ENCODE measurements at regions of chr6 and their contacts with region 1.

Region 1: DNA sequence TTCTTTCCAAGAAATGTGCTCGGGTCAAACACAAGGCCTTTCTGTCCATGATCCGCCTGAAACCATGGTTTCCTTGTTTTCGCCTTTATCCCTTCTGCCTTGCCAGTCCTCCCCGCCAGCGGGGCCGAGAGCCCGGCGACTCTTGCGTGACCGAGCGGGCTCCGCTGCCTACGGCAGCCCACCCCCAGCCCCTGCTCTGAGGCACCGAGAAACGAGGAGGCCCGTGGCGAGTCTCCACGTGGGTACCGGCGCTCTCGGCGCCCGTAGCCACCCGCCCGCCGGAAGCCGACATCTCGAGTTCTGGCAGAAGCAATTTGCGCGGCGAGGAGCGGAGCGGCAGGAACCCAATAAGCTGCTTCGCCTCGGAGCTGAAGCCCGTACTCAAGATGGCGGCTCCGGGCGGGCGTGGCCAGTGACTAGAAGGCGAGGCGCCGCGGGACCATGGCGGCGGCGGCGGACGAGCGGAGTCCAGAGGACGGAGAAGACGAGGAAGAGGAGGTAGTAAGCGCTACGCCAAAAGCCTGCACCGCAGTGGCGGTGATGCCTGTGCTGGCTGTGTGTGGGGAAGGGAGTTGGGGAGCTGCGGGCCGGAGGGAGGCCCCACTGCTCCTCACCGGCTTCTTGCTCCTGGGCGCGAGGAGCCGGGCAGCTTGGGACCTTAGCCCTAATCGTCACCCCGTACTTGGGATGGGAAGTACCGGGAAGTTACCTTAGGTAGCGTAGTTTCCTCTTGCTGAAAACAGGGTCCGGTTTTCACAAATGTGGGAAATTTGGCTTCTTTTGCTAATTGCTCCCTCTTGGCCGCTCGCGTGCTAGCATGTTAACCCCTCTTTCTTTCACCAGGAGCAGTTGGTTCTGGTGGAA is at the start of gene GTF3C6:
- DNase-seq: peak; percentile 90 to 94 (median 92)
- H3K4me3 ChIP-seq: peak within 1 kb of the TSS; percentile 69 to 94
- H3K4me3 Mint-ChIP-seq: peak within 1 kb of the TSS; percentile 95 to 99 (median 98)
- H3K27ac ChIP-seq: peak within 1 kb of the TSS; percentile 82
- H3K27ac Mint-ChIP-seq: peak within 1 kb of the TSS; percentile 91 to 99 (median 98)
- H3K4me1 ChIP-seq: peaks cover 20% of the 10 kb centered on the region
- H3K4me1 Mint-ChIP-seq: peaks cover 11 to 26% (median 17%) of the 10 kb centered on the region in 4 donors
- H3K27me3 ChIP-seq: no peaks in the 10 kb centered on the region
- H3K27me3 Mint-ChIP-seq: no peaks in the 10 kb centered on the region
- total RNA-seq, gene GTF3C6: 28.9 to 35.7 TPM

Region 2: DNA sequence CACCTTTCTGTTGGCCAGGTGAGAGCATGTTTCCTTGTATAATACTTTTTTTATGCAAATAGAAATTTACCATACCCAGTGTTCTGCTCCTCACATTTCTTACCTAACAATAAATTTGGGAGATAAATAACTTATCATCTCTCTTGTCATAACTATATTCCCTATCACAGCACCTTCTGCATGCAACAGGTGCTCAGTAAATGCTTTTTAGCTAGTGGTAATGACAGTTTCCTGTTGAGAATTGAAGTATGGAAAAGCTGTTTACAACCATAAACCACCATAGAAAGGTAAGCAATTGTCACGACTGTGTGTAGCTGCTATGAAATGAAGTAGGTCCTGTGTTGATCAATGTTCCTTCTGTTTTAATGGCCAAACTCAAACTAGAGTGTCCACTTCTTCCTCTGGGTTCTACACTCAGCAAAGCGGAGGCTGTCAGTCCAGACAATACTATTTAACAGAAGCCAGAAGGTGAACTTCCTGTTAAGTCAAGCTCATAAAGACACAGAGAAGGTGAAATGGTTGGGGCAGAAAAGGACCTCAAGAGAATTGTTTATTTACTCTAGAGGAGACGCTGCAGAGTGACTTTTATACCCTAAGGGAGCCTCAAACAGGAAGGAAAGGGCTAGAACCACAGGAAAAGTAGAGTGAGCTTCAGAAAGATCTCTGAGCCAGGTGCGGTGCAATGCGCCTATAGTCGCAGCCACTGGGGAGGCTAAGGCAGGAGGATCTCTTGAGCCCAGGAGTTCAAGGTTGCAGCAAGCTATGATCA is 398.1 kb before region 1 on chr6:
- CTCF ChIA-PET with region 1: no interaction called
- POLR2A ChIA-PET with region 1: interaction called, 10 read pairs
- intact Hi-C with region 1: no loop called
- DNase-seq: peak in 4 of 5 donors; percentile 28 to 49 (median 41)
- H3K4me3 ChIP-seq: peak overlapping the region in 1 of 2 donors; percentile 12
- H3K4me3 Mint-ChIP-seq: peak overlapping the region; percentile 29 to 81 (median 76)
- H3K27ac ChIP-seq: peak overlapping the region; percentile 23
- H3K27ac Mint-ChIP-seq: peak overlapping the region; percentile 79 to 93 (median 91)
- H3K4me1 ChIP-seq: peaks cover 44% of the 10 kb centered on the region
- H3K4me1 Mint-ChIP-seq: peaks cover 38 to 74% (median 52%) of the 10 kb centered on the region in 4 donors
- H3K27me3 ChIP-seq: no peaks in the 10 kb centered on the region
- H3K27me3 Mint-ChIP-seq: no peaks in the 10 kb centered on the region

Region 3: GRCh38 chr6:110688661-110689268 is 269.8 kb before region 1 on chr6:
- CTCF ChIA-PET with region 1: interaction called, 192 read pairs
- POLR2A ChIA-PET with region 1: interaction called, 16 read pairs
- intact Hi-C with region 1: no loop called
- DNase-seq: no peak
- H3K4me3 ChIP-seq: no peak overlapping the region
- H3K4me3 Mint-ChIP-seq: peak overlapping the region in 6 of 8 donors; percentile 24 to 76 (median 43)
- H3K27ac ChIP-seq: no peak overlapping the region
- H3K27ac Mint-ChIP-seq: peak overlapping the region; percentile 19 to 92 (median 74)
- H3K4me1 ChIP-seq: peaks cover 30% of the 10 kb centered on the region
- H3K4me1 Mint-ChIP-seq: peaks cover 22 to 50% (median 31%) of the 10 kb centered on the region in 4 donors
- H3K27me3 ChIP-seq: no peaks in the 10 kb centered on the region
- H3K27me3 Mint-ChIP-seq: no peaks in the 10 kb centered on the region

Measured in CD4-positive, alpha-beta memory T cell (primary cell).